ENCODE measurements at regions of chr14 and their contacts with region 1.

Region 1: GRCh38 chr14:104078031-104078455 is 7.5 kb upstream of the ASPG start:
- DNase-seq: peak; percentile 92 to 93
- ATAC-seq: peak; percentile 95 to 96
- H3K4me3 ChIP-seq: no peak overlapping the region
- H3K27ac ChIP-seq: peak overlapping the region in 1 of 2 experiments; percentile 51; a peak in 2 of 6 replicates
- H3K4me1 ChIP-seq: no peaks in the 10 kb centered on the region
- CTCF ChIP-seq: peak; percentile 99
- EP300 ChIP-seq: no peak
- POLR2A ChIP-seq: no peak
- RAD21 ChIP-seq: peak; percentile 93 to 97

Region 2: DNA sequence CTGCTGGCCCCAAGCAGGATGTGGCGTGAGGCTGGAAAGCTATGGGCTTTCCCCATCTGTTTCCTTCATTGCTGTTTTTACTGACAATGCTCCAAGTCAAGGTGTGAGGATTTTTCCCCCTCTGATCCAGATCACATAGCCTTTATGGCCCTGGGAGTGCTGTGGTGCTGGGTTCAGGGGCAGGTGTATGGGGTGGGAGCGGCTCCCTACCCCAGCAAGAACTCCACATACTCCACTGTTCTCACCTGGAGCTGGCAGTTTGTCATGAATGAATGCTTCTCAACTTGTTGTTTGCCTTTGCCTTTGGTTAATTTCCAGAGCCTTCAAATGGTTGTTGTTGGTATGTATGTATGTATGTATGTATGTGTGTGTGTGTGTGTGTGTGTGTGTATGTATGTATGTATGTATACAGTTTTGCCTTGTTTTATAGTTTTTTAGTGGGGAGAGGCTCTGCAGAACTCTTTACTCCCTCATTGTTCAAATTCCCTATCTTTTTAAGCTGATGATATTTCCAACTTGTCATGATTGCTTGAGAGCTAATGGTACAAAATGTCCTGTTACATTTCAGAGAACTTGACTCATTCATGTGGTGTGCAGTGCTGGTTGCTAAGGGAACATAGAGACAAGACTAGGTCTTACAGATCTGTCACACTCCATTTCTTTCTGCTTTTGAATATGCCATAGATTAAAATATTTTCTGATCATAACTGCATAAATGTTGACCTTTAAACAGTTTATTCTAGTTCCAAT is 29.1 kb before region 1 on chr14:
- CTCF ChIA-PET with region 1: interaction called, 15 read pairs
- POLR2A ChIA-PET with region 1: no interaction called
- DNase-seq: no peak
- ATAC-seq: no peak
- H3K4me3 ChIP-seq: no peak overlapping the region
- H3K27ac ChIP-seq: peak overlapping the region in 1 of 2 experiments; percentile 36; a peak in 1 of 6 replicates
- H3K4me1 ChIP-seq: no peaks in the 10 kb centered on the region; the same call in 2 of the 3 replicates
- CTCF ChIP-seq: no peak
- EP300 ChIP-seq: no peak
- POLR2A ChIP-seq: no peak
- RAD21 ChIP-seq: no peak

Region 3: GRCh38 chr14:104054222-104054905 is 23.7 kb before region 1 on chr14:
- CTCF ChIA-PET with region 1: interaction called, 15 read pairs
- POLR2A ChIA-PET with region 1: no interaction called
- DNase-seq: no peak
- ATAC-seq: no peak
- H3K4me3 ChIP-seq: no peak overlapping the region
- H3K27ac ChIP-seq: no peak overlapping the region
- H3K4me1 ChIP-seq: no peaks in the 10 kb centered on the region; the same call in 2 of the 3 replicates
- CTCF ChIP-seq: no peak
- EP300 ChIP-seq: no peak
- POLR2A ChIP-seq: no peak
- RAD21 ChIP-seq: no peak

Region 4: DNA sequence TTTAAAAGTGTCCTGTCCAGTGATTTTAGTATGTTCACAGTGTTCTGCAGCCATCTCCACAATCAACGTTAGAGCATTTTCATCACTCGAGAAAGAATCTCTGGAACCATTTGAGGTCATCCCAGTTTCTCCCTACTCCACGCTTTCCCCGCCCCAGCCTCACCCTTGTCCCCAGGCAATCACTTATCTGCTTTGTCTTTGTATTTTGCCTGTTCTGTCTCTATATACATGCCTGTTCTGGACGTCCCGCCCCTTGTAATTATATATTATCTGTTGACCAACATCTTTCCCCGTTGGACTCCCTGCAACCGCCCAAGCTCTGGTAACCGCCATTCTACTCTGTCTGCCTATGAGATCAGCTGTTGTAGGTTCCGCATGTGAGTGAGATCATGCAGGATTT is 14.0 kb before region 1 on chr14:
- CTCF ChIA-PET with region 1: interaction called, 13 read pairs
- POLR2A ChIA-PET with region 1: no interaction called
- DNase-seq: no peak
- ATAC-seq: no peak
- H3K4me3 ChIP-seq: no peak overlapping the region
- H3K27ac ChIP-seq: no peak overlapping the region
- H3K4me1 ChIP-seq: no peaks in the 10 kb centered on the region
- CTCF ChIP-seq: no peak
- EP300 ChIP-seq: no peak
- POLR2A ChIP-seq: no peak
- RAD21 ChIP-seq: no peak

Region 5: GRCh38 chr14:104094709-104095438 is 16.8 kb after region 1 on chr14:
- CTCF ChIA-PET with region 1: interaction called, 41 read pairs
- POLR2A ChIA-PET with region 1: no interaction called
- DNase-seq: peak; percentile 63 to 85
- ATAC-seq: peak; percentile 63 to 88
- H3K4me3 ChIP-seq: no peak overlapping the region
- H3K27ac ChIP-seq: no peak overlapping the region
- H3K4me1 ChIP-seq: peaks cover 5% of the 10 kb centered on the region; the same call in 2 of the 3 replicates
- CTCF ChIP-seq: peak; percentile 82
- EP300 ChIP-seq: no peak
- POLR2A ChIP-seq: no peak
- RAD21 ChIP-seq: peak; percentile 57 to 62

Region 6: DNA sequence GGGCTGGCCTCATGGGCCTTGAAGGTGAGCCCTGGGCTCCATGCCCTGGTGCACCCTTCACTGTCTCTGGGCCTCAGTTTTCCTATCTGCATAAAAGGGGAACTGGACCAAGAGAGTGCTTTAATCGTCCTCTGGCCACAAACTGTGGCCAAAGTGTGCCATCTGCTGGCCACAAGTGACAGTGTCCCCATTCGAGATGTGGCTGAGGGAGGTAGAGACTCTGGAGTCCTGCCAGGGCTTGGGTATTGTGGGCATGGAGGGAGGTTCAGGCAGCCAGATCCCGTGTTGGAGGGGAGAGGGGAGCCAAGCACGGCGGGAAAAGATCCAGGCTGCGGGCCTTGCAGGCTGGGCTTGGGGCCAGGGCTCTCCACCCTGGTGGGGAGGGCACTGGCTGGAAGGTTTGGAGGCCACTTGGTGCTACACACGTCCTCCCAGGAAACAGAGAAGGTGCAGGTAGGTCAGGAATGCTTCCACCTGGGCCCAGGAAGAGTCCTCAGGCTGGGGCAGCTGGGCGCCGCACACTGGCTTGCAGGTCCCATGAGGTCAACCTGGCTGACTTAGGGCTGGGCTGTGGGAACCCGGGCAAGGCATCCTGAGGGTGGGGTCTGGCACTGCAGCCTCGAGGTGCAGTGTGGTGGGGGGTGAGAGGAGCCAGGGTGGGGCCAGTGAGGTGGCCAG is 53.1 kb after region 1 on chr14:
- CTCF ChIA-PET with region 1: interaction called, 25 read pairs
- POLR2A ChIA-PET with region 1: no interaction called
- DNase-seq: peak; percentile 55 to 65
- ATAC-seq: peak in 1 of 2 experiments; percentile 58; a peak in 3 of 6 replicates
- H3K4me3 ChIP-seq: no peak overlapping the region
- H3K27ac ChIP-seq: no peak overlapping the region
- H3K4me1 ChIP-seq: peaks cover 9% of the 10 kb centered on the region; the same call in 2 of the 3 replicates
- CTCF ChIP-seq: peak; percentile 63
- EP300 ChIP-seq: no peak
- POLR2A ChIP-seq: no peak
- RAD21 ChIP-seq: peak; percentile 68 to 85

Region 7: DNA sequence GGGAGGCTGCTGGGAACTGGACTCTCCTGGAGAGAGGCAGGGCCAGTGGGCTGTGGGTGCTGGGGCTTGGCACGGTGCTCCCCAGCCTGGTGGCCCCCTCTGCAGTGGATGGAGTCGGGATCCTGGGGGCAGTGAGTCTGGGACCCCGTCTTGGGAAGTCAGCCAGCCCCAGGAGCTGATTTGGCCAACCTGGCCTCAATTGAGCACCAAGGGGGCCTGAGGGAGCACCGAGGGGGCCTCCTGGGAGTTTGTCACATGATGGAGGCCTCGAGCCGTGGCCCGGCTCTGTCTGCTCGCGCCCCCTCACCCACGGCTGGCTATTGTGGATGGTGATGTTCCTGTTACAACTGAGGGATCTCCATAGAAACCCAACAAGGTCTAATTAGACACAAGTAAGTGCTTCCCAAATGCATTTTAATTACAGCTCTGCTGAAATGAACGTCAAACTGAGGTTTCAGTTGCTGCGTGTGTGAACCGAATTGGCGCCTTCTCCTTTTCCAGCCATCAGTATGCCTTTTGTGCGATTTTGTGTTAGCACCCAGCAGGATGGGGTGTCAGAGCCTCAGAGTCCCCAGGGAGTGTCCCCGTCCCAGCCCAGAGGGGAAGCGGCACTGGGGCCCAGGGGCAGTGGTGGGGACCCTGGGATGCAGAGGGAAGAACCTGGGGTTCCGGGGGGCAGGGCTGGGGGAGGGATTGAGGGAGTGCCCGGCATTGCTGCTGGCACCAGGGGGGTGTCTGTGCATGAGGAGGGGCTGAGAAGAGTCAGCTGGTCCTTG is 132.2 kb after region 1 on chr14:
- CTCF ChIA-PET with region 1: no interaction called
- POLR2A ChIA-PET with region 1: no interaction called
- DNase-seq: no peak
- ATAC-seq: no peak
- H3K4me3 ChIP-seq: no peak overlapping the region
- H3K27ac ChIP-seq: no peak overlapping the region
- H3K4me1 ChIP-seq: no peaks in the 10 kb centered on the region
- CTCF ChIP-seq: no peak
- EP300 ChIP-seq: no peak
- POLR2A ChIP-seq: no peak
- RAD21 ChIP-seq: no peak

Region 8: GRCh38 chr14:104639889-104640548 is 562.0 kb after region 1 on chr14:
- CTCF ChIA-PET with region 1: interaction called, 45 read pairs
- POLR2A ChIA-PET with region 1: no interaction called
- DNase-seq: peak; percentile 77 to 87
- ATAC-seq: peak; percentile 88 to 98
- H3K4me3 ChIP-seq: no peak overlapping the region
- H3K27ac ChIP-seq: peak overlapping the region; percentile 42 to 55; a peak in 1 of 6 replicates
- H3K4me1 ChIP-seq: peaks cover 11% of the 10 kb centered on the region; the same call in 1 of the 3 replicates
- CTCF ChIP-seq: peak; percentile 92
- EP300 ChIP-seq: no peak
- POLR2A ChIP-seq: no peak
- RAD21 ChIP-seq: peak; percentile 95 to 96

Measured in A549 (cell line).